CD8-positive, alpha-beta T cell (primary cell): ENCODE measurements at regions of chr7 and their contacts with region 1.

Region 1: DNA sequence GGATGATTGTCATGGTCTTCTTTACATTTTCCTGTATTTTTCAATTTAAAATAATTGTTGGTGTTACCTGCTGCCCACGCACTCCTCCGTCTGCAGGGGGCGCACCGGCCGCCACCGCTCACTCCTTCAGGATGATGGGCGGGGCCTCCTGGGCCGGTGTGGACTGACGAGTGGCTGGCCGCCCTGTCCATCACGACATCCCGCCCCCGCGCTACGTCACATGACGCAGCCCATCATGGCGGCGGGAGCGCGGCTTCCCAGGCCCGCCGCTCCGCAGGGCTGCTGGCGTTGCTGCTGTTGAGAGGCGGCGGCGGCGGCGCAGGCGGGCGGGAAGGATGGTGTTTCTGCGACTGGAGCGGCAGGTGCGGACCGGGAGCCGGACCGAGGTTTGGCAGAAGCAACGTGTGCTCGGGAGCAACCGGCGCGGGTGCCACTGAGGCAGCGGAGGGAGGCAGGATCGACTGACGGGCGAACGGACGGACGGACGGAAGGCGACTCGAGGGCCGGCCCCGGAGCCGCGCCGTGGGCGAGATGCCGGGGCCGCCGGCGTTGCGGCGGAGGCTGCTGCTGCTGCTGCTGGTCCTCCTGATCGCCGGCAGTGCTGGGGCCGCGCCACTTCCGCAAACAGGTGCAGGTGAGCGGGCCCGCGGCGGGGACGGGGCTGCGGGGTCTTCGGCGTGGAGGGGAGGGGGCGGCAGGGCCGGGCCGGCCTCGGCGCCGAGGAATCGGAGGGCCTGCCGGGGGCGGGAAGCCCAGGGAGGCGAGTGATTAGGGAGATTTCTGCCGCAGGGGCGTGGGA is at the start of gene LMTK2:
- DNase-seq: peak; percentile 92 to 99 (median 96)
- ATAC-seq: peak; percentile 100
- H3K4me3 ChIP-seq: peak within 1 kb of the TSS; percentile 73 to 81
- H3K4me3 Mint-ChIP-seq: peak within 1 kb of the TSS; percentile 98
- H3K27ac ChIP-seq: peak within 1 kb of the TSS; percentile 65 to 77
- H3K27ac Mint-ChIP-seq: peak within 1 kb of the TSS; percentile 93
- H3K4me1 ChIP-seq: peaks cover 11% of the 10 kb centered on the region
- H3K4me1 Mint-ChIP-seq: peaks cover 47% of the 10 kb centered on the region
- H3K27me3 ChIP-seq: no peaks in the 10 kb centered on the region
- H3K27me3 Mint-ChIP-seq: peaks cover 10% of the 10 kb centered on the region
- CTCF ChIP-seq: peak; percentile 79
- total RNA-seq, gene LMTK2: 33.5 to 33.8 TPM

Region 2: GRCh38 chr7:98021588-98022351 is 85.1 kb before region 1 on chr7:
- CTCF ChIA-PET with region 1: interaction called, 3 read pairs
- POLR2A ChIA-PET with region 1: no interaction called
- intact Hi-C with region 1: loop called in 1 of 2 experiments (anchors 5 kb)
- DNase-seq: peak; percentile 63 to 88 (median 75)
- ATAC-seq: peak; percentile 75
- H3K4me3 ChIP-seq: no peak overlapping the region
- H3K4me3 Mint-ChIP-seq: no peak overlapping the region
- H3K27ac ChIP-seq: no peak overlapping the region
- H3K27ac Mint-ChIP-seq: no peak overlapping the region
- H3K4me1 ChIP-seq: no peaks in the 10 kb centered on the region
- H3K4me1 Mint-ChIP-seq: peaks cover 3% of the 10 kb centered on the region
- H3K27me3 ChIP-seq: no peaks in the 10 kb centered on the region
- H3K27me3 Mint-ChIP-seq: peaks cover 15% of the 10 kb centered on the region
- CTCF ChIP-seq: peak; percentile 87

Region 3: DNA sequence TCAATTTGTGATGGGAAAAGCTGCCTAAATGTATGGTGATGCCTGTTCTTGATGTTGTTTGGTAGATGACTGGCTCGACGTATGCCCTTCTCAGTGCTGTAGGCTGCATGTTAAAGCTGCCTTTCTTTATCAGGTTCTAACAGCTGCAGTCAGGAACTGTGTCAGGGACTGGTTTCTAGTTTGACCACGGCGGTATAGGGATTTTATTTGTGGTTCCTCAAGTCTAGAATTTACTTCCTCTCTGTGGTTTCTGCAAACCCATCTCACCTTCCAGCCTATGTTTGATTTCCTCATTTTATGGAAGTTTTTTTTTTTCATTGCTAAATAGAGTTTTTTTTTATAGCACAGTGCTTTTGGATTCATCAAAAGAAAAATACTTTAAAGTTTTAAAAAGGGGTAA is 26.3 kb after region 1 on chr7:
- CTCF ChIA-PET with region 1: interaction called, 6 read pairs
- POLR2A ChIA-PET with region 1: interaction called, 4 read pairs
- intact Hi-C with region 1: loop called in 1 of 2 experiments (anchors 2 kb)
- DNase-seq: peak in 3 of 9 experiments; percentile 10 to 74 (median 62)
- ATAC-seq: peak; percentile 42
- H3K4me3 ChIP-seq: no peak overlapping the region
- H3K4me3 Mint-ChIP-seq: peak overlapping the region; percentile 30
- H3K27ac ChIP-seq: no peak overlapping the region
- H3K27ac Mint-ChIP-seq: no peak overlapping the region
- H3K4me1 ChIP-seq: peaks cover 33% of the 10 kb centered on the region
- H3K4me1 Mint-ChIP-seq: peaks cover 58% of the 10 kb centered on the region
- H3K27me3 ChIP-seq: no peaks in the 10 kb centered on the region
- H3K27me3 Mint-ChIP-seq: no peaks in the 10 kb centered on the region
- CTCF ChIP-seq: no peak

Region 4: DNA sequence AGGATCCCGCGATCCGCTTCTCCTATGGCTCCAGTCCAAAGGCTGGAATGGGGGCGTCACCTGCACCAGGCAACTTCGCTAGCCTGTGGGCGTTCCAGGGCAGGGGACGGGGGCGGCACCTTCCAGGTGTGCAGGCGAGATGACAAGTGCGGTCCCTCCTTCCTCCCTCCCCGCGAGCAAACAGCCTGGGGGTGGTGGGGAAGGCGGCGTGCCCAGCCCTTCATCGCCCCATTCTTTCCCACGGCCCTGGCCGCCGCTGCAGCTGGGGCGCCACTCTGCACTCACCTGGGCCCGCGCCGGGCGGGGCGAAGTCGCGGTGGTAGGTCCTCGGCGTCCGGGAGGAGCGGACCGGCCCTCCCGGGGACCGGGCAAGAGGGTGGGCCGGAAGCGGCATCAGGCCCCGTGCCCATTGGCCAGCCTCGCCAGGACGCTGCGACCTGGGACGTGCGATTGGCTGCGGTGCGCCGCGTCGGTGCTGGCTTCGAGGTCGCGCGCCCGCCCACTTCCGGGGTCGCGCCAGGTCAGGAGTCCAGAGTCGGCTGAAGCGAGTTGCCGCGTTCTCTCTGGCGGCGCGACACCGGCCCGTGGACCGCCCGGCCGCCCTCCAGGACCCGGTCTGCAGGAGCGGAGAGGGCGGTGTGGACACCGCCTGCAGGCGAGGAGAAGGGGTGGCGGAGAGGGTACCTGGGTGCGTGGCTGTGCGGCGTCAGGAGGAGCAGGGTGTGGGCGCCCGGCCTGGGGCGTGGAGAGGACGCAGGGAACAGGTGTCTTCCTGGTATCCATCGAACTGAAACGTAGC is 145.2 kb after region 1 on chr7 and contains the start of gene TECPR1:
- CTCF ChIA-PET with region 1: interaction called, 3 read pairs
- POLR2A ChIA-PET with region 1: interaction called, 4 read pairs
- intact Hi-C with region 1: loop called (anchors 1 to 2 kb)
- DNase-seq: peak; percentile 66 to 94 (median 87)
- ATAC-seq: peak; percentile 68
- H3K4me3 ChIP-seq: peak within 1 kb of the TSS; percentile 78 to 86
- H3K4me3 Mint-ChIP-seq: peak within 1 kb of the TSS; percentile 94
- H3K27ac ChIP-seq: peak within 1 kb of the TSS; percentile 84 to 87
- H3K27ac Mint-ChIP-seq: peak within 1 kb of the TSS; percentile 99
- H3K4me1 ChIP-seq: peaks cover 47% of the 10 kb centered on the region
- H3K4me1 Mint-ChIP-seq: peaks cover 54% of the 10 kb centered on the region
- H3K27me3 ChIP-seq: no peaks in the 10 kb centered on the region
- H3K27me3 Mint-ChIP-seq: no peaks in the 10 kb centered on the region
- CTCF ChIP-seq: peak; percentile 22
- total RNA-seq, gene TECPR1: 64.4 to 68.2 TPM

Region 5: DNA sequence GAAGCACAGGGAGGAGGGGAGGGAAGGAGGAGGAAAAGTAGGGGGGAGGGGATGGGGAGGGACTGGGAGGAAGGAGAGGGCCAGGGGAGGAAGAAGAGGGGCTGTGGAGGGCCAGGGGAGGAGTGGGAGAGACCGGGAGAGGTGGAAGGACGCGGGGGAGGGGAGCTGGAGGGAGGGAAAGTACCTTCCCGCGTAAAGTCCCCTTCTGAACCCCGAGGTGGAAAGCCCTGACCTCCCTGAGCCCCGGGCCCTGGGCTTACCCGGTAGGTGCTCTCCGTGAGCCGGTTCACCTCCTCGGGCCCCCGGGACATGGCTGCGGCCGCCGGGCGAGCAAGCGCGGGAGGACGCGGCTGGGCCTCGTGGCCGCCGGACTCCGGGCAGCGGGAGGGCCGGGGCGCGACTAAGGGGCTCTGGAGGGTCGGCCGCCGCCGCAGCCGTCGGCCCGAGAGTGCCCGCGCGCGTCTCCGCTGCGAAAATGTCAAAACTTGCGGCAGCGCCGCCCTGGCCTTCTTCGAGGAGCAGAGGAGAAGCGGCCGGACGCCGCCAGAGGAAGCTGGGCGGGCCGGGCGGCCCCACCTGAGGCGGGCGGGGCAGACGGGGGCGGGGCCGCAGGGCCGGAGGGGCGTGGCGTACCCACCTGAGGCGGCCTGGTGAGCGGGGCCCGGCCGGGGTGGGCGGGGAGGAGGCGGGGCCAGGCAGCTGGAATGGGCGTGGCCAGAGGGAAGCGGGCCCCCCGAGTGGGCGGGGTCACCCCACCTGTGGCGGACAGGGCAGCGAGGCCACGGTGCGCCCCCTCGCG is 293.9 kb after region 1 on chr7 and contains the start of gene BAIAP2L1:
- CTCF ChIA-PET with region 1: interaction called, 5 read pairs
- POLR2A ChIA-PET with region 1: no interaction called
- intact Hi-C with region 1: loop called (anchors 1 to 2 kb)
- DNase-seq: peak; percentile 65 to 88 (median 77)
- ATAC-seq: peak; percentile 89
- H3K4me3 ChIP-seq: peak within 1 kb of the TSS in 1 of 2 experiments; percentile 47
- H3K4me3 Mint-ChIP-seq: peak within 1 kb of the TSS; percentile 66
- H3K27ac ChIP-seq: no peak within 1 kb of the TSS
- H3K27ac Mint-ChIP-seq: no peak within 1 kb of the TSS
- H3K4me1 ChIP-seq: peaks cover 8% of the 10 kb centered on the region
- H3K4me1 Mint-ChIP-seq: peaks cover 9% of the 10 kb centered on the region
- H3K27me3 ChIP-seq: peaks cover 0 to 8% of the 10 kb centered on the region in 2 experiments
- H3K27me3 Mint-ChIP-seq: peaks cover 24% of the 10 kb centered on the region
- CTCF ChIP-seq: peak; percentile 38
- total RNA-seq, gene BAIAP2L1: 0.43 TPM in 1 of 2 experiments, not detected in the other